ENCODE measurements at regions of chr15 and their contacts with region 1.

Region 1: GRCh38 chr15:68543165-68544008 is 35.4 kb upstream of the CORO2B start:
- DNase-seq: peak; percentile 94
- H3K4me3 ChIP-seq: no peak overlapping the region
- H3K27ac ChIP-seq: peak overlapping the region; percentile 69
- H3K4me1 ChIP-seq: peaks cover 16% of the 10 kb centered on the region
- H3K27me3 ChIP-seq: no peaks in the 10 kb centered on the region

Region 2: DNA sequence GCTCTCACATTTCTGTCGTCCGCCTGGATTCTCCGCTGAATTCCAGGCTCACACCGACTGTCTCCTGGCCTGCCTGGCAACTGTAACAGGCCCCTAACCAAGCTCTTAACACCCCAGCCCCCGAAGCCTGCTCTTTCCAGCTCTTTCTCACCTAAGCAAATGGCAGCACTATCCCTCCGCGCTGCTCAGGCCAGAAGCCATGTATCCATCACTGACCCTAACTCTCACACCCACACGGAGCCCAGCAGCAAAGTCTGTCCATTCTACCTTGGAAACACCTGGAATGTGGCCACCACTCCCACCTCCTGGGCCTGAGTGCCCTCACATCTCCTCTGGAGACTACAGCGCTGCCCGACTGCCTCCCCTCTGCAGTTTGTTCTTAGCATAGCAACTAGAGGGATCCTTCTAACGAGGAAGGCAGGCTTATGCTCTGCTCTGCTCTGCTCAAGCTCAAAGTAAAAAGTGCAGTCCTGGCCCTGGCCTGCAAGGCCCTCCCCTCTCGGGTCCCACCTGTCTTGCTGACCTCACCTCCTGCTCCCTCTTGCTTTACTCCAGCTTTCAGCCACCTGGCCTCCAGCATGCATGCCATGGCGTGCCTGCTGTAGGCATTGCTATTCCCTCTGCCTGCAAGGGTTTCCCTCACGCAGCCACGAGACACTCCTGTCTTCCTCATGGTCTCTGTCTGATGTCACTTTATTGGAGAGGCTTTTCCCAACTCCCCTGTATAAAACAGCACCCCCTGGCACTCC is 238.6 kb before region 1 on chr15:
- in situ Hi-C with region 1: loop called (anchors 10 kb)
- DNase-seq: no peak
- H3K4me3 ChIP-seq: no peak overlapping the region
- H3K27ac ChIP-seq: peak overlapping the region; percentile 50
- H3K4me1 ChIP-seq: peaks cover 23% of the 10 kb centered on the region
- H3K27me3 ChIP-seq: no peaks in the 10 kb centered on the region